HCT116 (cell line): ENCODE measurements at regions of chr4 and their contacts with region 1.

Region 1: GRCh38 chr4:186297013-186297645 is 31.1 kb downstream of the F11 start:
- DNase-seq: peak; percentile 56
- ATAC-seq: peak; percentile 74
- H3K4me3 ChIP-seq: no peak overlapping the region
- H3K27ac ChIP-seq: no peak overlapping the region
- H3K4me1 ChIP-seq: no peaks in the 10 kb centered on the region
- H3K27me3 ChIP-seq: no peaks in the 10 kb centered on the region
- CTCF ChIP-seq: peak; percentile 53 to 78 (median 64); a peak in 5 of 6 replicates
- POLR2A ChIP-seq: no peak
- RAD21 ChIP-seq: peak; percentile 86

Region 2: GRCh38 chr4:186554539-186554913 is 257.4 kb after region 1 on chr4:
- CTCF ChIA-PET with region 1: no interaction called
- POLR2A ChIA-PET with region 1: no interaction called
- RAD21 ChIA-PET with region 1: no interaction called
- intact Hi-C with region 1: loop called (anchors 10 kb)
- DNase-seq: peak; percentile 37
- ATAC-seq: peak; percentile 66
- H3K4me3 ChIP-seq: peak overlapping the region; percentile 46 to 61
- H3K27ac ChIP-seq: no peak overlapping the region
- H3K4me1 ChIP-seq: peaks cover 0 to 13% of the 10 kb centered on the region in 2 experiments; a peak in 1 of 4 replicates
- H3K27me3 ChIP-seq: no peaks in the 10 kb centered on the region; the same call in 1 of the 2 replicates
- CTCF ChIP-seq: peak in 2 of 3 experiments; percentile 12 to 22; a peak in 2 of 6 replicates
- POLR2A ChIP-seq: no peak
- RAD21 ChIP-seq: peak; percentile 21; the same call in 1 of the 2 replicates

Region 3: DNA sequence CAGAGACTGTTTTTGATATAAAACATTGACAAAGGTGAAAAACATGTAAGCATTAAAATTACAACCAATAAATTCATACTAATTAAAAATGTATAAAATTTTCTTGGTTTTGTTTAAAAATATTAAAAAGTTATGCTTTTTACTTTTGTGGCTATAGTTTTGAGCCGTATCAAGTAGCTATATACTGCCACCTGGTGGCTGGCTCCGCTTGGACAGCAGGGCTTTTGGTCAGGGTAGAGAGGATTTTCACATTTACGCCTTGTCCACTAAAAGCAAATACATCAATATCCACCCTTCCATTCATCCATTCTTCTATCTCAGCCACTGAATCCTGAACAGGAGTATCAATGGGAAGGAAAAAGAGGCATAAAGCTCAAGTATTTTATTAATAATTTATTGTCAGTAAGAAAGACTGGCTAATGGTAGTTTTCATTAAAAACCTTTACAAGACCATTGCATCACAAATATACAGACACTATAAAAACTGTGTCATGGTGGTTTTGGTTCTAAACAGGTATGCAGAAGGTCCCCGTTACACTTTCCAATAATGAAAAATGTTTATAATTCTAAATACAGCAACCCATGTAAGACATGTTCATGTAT is 290.4 kb after region 1 on chr4:
- CTCF ChIA-PET with region 1: interaction called, 9 read pairs
- POLR2A ChIA-PET with region 1: no interaction called
- RAD21 ChIA-PET with region 1: no interaction called
- intact Hi-C with region 1: loop called (anchors 1 kb)
- DNase-seq: peak; percentile 21
- ATAC-seq: peak; percentile 69
- H3K4me3 ChIP-seq: no peak overlapping the region
- H3K27ac ChIP-seq: no peak overlapping the region
- H3K4me1 ChIP-seq: no peaks in the 10 kb centered on the region
- H3K27me3 ChIP-seq: no peaks in the 10 kb centered on the region
- CTCF ChIP-seq: peak; percentile 52 to 81 (median 74)
- POLR2A ChIP-seq: no peak
- RAD21 ChIP-seq: peak; percentile 57

Region 4: DNA sequence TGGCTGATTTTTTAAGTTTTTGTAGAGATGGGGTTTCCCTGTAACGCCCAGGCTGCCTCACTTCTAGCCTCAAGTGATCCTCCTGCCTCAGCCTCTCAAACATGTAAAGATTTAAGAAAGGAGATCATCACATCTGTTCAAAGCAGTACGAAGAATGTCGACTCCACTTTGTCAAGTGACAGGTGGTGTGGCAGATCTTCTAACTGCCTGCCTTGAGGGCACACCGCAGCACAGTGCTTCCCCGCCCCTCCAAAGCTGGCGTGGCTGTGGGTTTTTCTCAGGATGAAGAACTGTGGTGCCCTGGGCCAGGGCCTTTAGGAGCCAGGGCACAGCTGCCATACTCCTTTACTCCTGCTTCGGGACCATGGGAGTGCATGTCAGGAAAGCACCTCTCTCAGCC is 301.6 kb after region 1 on chr4:
- CTCF ChIA-PET with region 1: no interaction called
- POLR2A ChIA-PET with region 1: no interaction called
- RAD21 ChIA-PET with region 1: no interaction called
- intact Hi-C with region 1: no loop called
- DNase-seq: no peak
- ATAC-seq: no peak
- H3K4me3 ChIP-seq: no peak overlapping the region
- H3K27ac ChIP-seq: no peak overlapping the region
- H3K4me1 ChIP-seq: no peaks in the 10 kb centered on the region
- H3K27me3 ChIP-seq: no peaks in the 10 kb centered on the region
- CTCF ChIP-seq: no peak
- POLR2A ChIP-seq: no peak
- RAD21 ChIP-seq: no peak